Caco-2 (cell line): ENCODE measurements at regions of chr13 and their contacts with region 1.

Region 1: GRCh38 chr13:89925107-89925506 is 1422.4 kb upstream of the MIR17HG start:
- DNase-seq: peak in 1 of 2 experiments; percentile 43
- H3K4me3 ChIP-seq: no peak overlapping the region
- H3K4me3 Mint-ChIP-seq: no peak overlapping the region
- H3K27ac Mint-ChIP-seq: no peak overlapping the region
- H3K4me1 ChIP-seq: peaks cover under 1% of the 10 kb centered on the region; the same call in 1 of the 2 replicates
- H3K4me1 Mint-ChIP-seq: no peaks in the 10 kb centered on the region
- H3K27me3 ChIP-seq: no peaks in the 10 kb centered on the region
- H3K27me3 Mint-ChIP-seq: no peaks in the 10 kb centered on the region
- CTCF ChIP-seq: peak; percentile 48 to 71

Region 2: DNA sequence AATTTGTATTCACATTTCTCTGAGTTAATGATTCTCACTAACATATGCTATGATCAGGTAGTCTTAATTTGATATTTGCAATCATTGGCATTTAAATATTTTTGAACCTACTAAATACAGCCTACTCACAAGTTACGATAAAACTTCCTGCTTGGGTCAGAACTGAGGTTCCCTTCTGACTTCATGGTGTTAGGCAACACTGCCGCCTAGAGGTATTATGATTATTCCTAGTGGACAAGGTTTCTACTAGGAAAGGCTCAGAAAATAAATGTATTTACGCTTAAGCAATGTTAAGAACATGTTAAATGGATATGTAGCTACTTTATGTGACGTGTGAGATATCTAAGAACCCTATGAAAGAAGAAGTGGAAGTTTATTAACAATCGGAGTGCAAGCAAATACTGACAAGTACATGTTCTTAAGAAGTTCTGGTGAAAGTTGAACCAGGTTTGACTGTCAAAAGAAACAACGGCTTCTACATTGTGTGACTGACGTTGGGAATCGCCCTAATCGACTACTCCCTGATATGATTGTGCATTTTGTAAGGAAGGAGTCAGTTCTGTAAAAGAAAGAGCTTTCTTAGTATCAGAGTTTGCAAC is 858.1 kb before region 1 on chr13:
- CTCF ChIA-PET with region 1: no interaction called
- POLR2A ChIA-PET with region 1: no interaction called
- intact Hi-C with region 1: loop called (anchors 5 kb)
- DNase-seq: peak; percentile 32 to 61
- H3K4me3 ChIP-seq: no peak overlapping the region
- H3K4me3 Mint-ChIP-seq: no peak overlapping the region
- H3K27ac Mint-ChIP-seq: no peak overlapping the region
- H3K4me1 ChIP-seq: no peaks in the 10 kb centered on the region
- H3K4me1 Mint-ChIP-seq: no peaks in the 10 kb centered on the region
- H3K27me3 ChIP-seq: no peaks in the 10 kb centered on the region
- H3K27me3 Mint-ChIP-seq: no peaks in the 10 kb centered on the region
- CTCF ChIP-seq: peak; percentile 45 to 60

Region 3: GRCh38 chr13:89432997-89433396 is 492.1 kb before region 1 on chr13:
- CTCF ChIA-PET with region 1: interaction called, 4 read pairs
- POLR2A ChIA-PET with region 1: no interaction called
- intact Hi-C with region 1: loop called (anchors 2 kb)
- DNase-seq: no peak
- H3K4me3 ChIP-seq: no peak overlapping the region
- H3K4me3 Mint-ChIP-seq: peak overlapping the region; percentile 54
- H3K27ac Mint-ChIP-seq: peak overlapping the region; percentile 76
- H3K4me1 ChIP-seq: peaks cover 3% of the 10 kb centered on the region; the same call in 1 of the 2 replicates
- H3K4me1 Mint-ChIP-seq: peaks cover 11% of the 10 kb centered on the region
- H3K27me3 ChIP-seq: no peaks in the 10 kb centered on the region
- H3K27me3 Mint-ChIP-seq: no peaks in the 10 kb centered on the region
- CTCF ChIP-seq: no peak

Region 4: DNA sequence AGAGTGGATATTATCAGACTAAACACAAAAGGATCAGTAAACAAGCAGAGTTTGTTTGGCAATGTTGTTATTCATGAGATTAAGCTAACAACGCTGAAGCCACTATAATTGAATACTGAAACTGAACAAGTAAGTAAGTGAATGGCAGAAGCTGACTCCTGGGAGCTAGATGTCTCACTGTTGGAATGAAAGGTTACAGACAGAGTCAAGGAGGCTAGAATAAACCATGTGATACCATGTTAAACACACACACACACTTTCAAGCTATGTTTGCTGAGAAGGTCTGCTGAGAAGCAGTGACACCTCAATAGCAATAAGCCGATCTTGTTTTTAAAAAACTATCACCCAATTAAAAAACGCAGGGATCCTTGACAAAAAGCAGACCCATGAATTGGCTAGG is 187.0 kb before region 1 on chr13:
- CTCF ChIA-PET with region 1: no interaction called
- POLR2A ChIA-PET with region 1: no interaction called
- intact Hi-C with region 1: loop called (anchors 10 kb)
- DNase-seq: no peak
- H3K4me3 ChIP-seq: no peak overlapping the region
- H3K4me3 Mint-ChIP-seq: no peak overlapping the region
- H3K27ac Mint-ChIP-seq: no peak overlapping the region
- H3K4me1 ChIP-seq: peaks cover 14% of the 10 kb centered on the region
- H3K4me1 Mint-ChIP-seq: peaks cover 10% of the 10 kb centered on the region
- H3K27me3 ChIP-seq: no peaks in the 10 kb centered on the region
- H3K27me3 Mint-ChIP-seq: no peaks in the 10 kb centered on the region
- CTCF ChIP-seq: no peak